Natural killer cell (primary cell): ENCODE measurements at regions of chr5 and their contacts with region 1.

Region 1: DNA sequence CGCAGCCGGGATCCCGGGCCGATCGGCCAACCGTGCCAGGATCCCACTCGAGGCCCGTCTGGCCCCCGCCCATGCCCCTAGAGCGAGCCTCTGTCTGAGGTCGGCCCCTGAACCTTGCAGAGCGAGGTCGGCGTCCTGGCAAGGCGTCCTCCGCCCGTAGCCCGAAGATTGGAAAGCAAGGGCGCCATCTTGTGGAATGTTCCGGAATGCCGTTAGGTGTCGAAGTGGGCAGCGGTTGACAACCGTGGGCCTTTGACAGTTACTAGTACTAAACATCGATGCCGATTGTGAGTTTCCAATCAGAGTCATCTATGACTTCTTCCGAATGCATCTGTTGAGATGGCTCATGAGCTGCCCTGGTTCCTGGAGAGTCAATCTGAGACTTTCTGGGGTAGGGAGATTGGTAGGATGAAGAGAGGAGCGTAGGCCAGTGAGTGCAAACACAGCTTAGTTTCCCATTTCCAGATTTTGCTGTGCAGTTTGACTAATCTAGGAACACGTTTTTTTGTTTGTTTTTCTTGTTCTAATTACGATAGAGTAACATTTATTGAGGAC is 923 bp upstream of the PLK2 start:
- DNase-seq: peak; percentile 87 to 94
- ATAC-seq: peak; percentile 67 to 81 (median 69)
- H3K4me3 ChIP-seq: peak overlapping the region; percentile 94
- H3K4me3 Mint-ChIP-seq: peak overlapping the region; percentile 91
- H3K27ac ChIP-seq: peak overlapping the region; percentile 95
- H3K27ac Mint-ChIP-seq: peak overlapping the region; percentile 84 to 90
- H3K4me1 ChIP-seq: peaks cover 18% of the 10 kb centered on the region
- H3K4me1 Mint-ChIP-seq: peaks cover 15 to 16% of the 10 kb centered on the region in 2 donors
- H3K27me3 ChIP-seq: peaks cover 13% of the 10 kb centered on the region
- H3K27me3 Mint-ChIP-seq: peaks cover 6 to 22% of the 10 kb centered on the region in 2 donors
- CTCF ChIP-seq: peak; percentile 75

Region 2: DNA sequence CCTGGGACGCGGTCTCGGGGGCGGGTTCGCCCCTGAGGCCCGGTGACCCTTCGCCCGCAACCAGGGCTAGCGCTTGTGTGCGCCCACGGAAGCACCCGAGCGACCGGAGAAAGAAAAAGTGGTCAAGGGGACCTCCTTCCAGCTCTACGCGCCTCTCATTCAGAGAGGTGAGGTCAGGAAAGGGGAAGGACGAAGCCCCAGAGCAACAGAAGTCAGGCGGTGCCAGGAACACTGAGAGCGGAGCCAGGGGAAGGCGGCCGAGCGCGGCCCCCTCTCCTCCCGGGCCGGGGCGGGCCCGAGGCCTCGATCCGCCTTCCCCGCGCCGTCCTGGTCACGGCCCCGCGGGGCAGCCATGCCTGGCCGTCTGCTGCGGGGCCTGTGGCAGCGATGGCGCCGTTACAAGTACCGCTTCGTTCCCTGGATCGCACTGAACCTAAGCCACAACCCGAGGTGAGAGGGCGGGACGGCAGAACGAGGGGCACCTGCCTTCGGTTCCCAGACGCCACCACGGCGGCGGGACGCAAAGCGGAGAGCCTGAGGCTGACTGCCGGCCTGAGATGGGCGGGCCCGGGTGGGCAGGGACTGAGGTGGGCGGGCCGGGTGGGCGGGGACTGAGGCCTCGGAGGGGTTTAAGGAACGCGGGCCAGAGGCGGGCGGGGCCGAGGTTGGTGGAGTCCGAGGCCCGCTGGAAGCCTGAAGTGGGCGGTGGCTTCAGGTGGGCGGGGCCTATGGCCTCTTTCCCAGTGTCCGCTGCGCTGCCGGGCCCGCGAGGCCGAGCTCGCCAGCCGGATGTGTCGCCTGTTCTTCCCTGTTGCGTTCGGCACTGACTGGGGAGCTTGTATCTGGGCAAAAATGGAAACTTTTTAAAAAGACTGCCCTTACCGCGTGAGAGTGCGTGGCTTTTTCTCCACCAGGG is 1551.3 kb before region 1 on chr5 and contains the start of gene SETD9:
- intact Hi-C with region 1: loop called (anchors 5 kb)
- DNase-seq: peak; percentile 81 to 92
- ATAC-seq: peak; percentile 82 to 92 (median 85)
- H3K4me3 ChIP-seq: peak within 1 kb of the TSS; percentile 58
- H3K4me3 Mint-ChIP-seq: peak within 1 kb of the TSS; percentile 99
- H3K27ac ChIP-seq: peak within 1 kb of the TSS; percentile 78
- H3K27ac Mint-ChIP-seq: peak within 1 kb of the TSS; percentile 90 to 93
- H3K4me1 ChIP-seq: peaks cover 10% of the 10 kb centered on the region
- H3K4me1 Mint-ChIP-seq: peaks cover 21 to 23% of the 10 kb centered on the region in 2 donors
- H3K27me3 ChIP-seq: no peaks in the 10 kb centered on the region
- H3K27me3 Mint-ChIP-seq: no peaks in the 10 kb centered on the region
- CTCF ChIP-seq: no peak
- total RNA-seq, gene SETD9: 5.6 to 8.6 (median 6.0) TPM

Region 3: GRCh38 chr5:57298295-57298984 is 1162.4 kb before region 1 on chr5:
- intact Hi-C with region 1: loop called (anchors 1 kb)
- DNase-seq: peak; percentile 77 to 94
- ATAC-seq: peak; percentile 91 to 93 (median 92)
- H3K4me3 ChIP-seq: peak overlapping the region; percentile 10
- H3K4me3 Mint-ChIP-seq: peak overlapping the region; percentile 74
- H3K27ac ChIP-seq: no peak overlapping the region
- H3K27ac Mint-ChIP-seq: peak overlapping the region; percentile 61 to 77
- H3K4me1 ChIP-seq: peaks cover 12% of the 10 kb centered on the region
- H3K4me1 Mint-ChIP-seq: peaks cover 9 to 10% of the 10 kb centered on the region in 2 donors
- H3K27me3 ChIP-seq: no peaks in the 10 kb centered on the region
- H3K27me3 Mint-ChIP-seq: no peaks in the 10 kb centered on the region
- CTCF ChIP-seq: peak; percentile 60

Region 4: GRCh38 chr5:57499262-57500050 is 961.4 kb before region 1 on chr5:
- intact Hi-C with region 1: loop called (anchors 2 kb)
- DNase-seq: peak in 1 of 2 donors; percentile 44
- ATAC-seq: peak in 1 of 3 donors; percentile 39
- H3K4me3 ChIP-seq: no peak overlapping the region
- H3K4me3 Mint-ChIP-seq: peak overlapping the region; percentile 43
- H3K27ac ChIP-seq: no peak overlapping the region
- H3K27ac Mint-ChIP-seq: peak overlapping the region in 1 of 2 donors; percentile 32
- H3K4me1 ChIP-seq: no peaks in the 10 kb centered on the region
- H3K4me1 Mint-ChIP-seq: peaks cover 0 to 4% of the 10 kb centered on the region in 2 donors
- H3K27me3 ChIP-seq: no peaks in the 10 kb centered on the region
- H3K27me3 Mint-ChIP-seq: peaks cover 12 to 25% of the 10 kb centered on the region in 2 donors
- CTCF ChIP-seq: peak; percentile 28

Region 5: GRCh38 chr5:57650360-57651069 is 810.3 kb before region 1 on chr5:
- intact Hi-C with region 1: loop called (anchors 2 kb)
- DNase-seq: peak in 1 of 2 donors; percentile 38
- ATAC-seq: peak; percentile 39 to 63 (median 40)
- H3K4me3 ChIP-seq: no peak overlapping the region
- H3K4me3 Mint-ChIP-seq: no peak overlapping the region
- H3K27ac ChIP-seq: no peak overlapping the region
- H3K27ac Mint-ChIP-seq: no peak overlapping the region
- H3K4me1 ChIP-seq: no peaks in the 10 kb centered on the region
- H3K4me1 Mint-ChIP-seq: no peaks in the 10 kb centered on the region
- H3K27me3 ChIP-seq: no peaks in the 10 kb centered on the region
- H3K27me3 Mint-ChIP-seq: peaks cover 0 to 3% of the 10 kb centered on the region in 2 donors
- CTCF ChIP-seq: peak; percentile 44

Region 6: DNA sequence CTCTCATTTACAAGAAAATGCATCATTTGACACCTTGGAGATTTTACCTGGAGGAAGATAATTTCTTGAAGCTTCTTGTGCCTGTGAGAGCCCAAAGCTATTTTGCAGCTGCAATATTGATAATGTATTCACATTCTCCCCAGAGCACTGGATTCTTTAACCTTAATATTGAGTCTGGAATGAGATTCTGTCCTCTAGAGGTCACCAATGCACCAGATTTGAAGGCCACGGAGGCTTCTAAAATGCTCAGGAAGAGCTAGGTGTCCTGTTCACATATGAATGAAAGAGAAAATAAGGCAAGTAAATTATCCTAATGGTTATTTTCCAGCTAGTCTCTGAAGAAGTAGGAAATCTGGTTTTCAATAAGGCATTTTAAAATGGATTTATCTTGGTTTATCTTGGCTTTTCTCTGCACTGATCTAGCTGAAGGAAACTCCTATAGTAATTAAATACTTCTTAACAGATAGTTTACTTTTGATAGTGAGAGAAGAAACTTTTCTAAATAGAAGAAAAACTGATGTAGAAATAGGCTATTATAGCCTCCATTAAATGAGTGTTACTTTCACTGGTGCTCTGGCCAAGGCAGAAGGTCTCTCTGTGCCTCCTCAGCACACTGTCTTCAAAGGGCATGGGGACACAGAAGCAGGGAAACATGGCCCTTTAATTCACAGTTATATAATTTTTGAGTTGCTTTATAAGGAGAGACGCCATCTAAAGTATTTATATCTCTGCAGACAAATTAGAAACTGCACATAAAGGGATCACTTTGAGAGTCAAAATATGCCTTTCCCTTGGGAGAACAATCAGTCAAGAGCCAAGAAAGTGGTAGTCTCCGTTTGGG is 681.2 kb before region 1 on chr5:
- intact Hi-C with region 1: loop called (anchors 1 kb)
- DNase-seq: peak in 1 of 2 donors; percentile 49
- ATAC-seq: peak in 2 of 3 donors; percentile 58 to 72
- H3K4me3 ChIP-seq: no peak overlapping the region
- H3K4me3 Mint-ChIP-seq: no peak overlapping the region
- H3K27ac ChIP-seq: no peak overlapping the region
- H3K27ac Mint-ChIP-seq: no peak overlapping the region
- H3K4me1 ChIP-seq: no peaks in the 10 kb centered on the region
- H3K4me1 Mint-ChIP-seq: no peaks in the 10 kb centered on the region
- H3K27me3 ChIP-seq: no peaks in the 10 kb centered on the region
- H3K27me3 Mint-ChIP-seq: no peaks in the 10 kb centered on the region
- CTCF ChIP-seq: peak; percentile 47

Region 7: GRCh38 chr5:57887851-57888621 is 572.8 kb before region 1 on chr5:
- intact Hi-C with region 1: loop called (anchors 5 kb)
- DNase-seq: no peak
- ATAC-seq: peak in 1 of 3 donors; percentile 49
- H3K4me3 ChIP-seq: no peak overlapping the region
- H3K4me3 Mint-ChIP-seq: no peak overlapping the region
- H3K27ac ChIP-seq: no peak overlapping the region
- H3K27ac Mint-ChIP-seq: no peak overlapping the region
- H3K4me1 ChIP-seq: no peaks in the 10 kb centered on the region
- H3K4me1 Mint-ChIP-seq: no peaks in the 10 kb centered on the region
- H3K27me3 ChIP-seq: no peaks in the 10 kb centered on the region
- H3K27me3 Mint-ChIP-seq: no peaks in the 10 kb centered on the region
- CTCF ChIP-seq: no peak

Region 8: DNA sequence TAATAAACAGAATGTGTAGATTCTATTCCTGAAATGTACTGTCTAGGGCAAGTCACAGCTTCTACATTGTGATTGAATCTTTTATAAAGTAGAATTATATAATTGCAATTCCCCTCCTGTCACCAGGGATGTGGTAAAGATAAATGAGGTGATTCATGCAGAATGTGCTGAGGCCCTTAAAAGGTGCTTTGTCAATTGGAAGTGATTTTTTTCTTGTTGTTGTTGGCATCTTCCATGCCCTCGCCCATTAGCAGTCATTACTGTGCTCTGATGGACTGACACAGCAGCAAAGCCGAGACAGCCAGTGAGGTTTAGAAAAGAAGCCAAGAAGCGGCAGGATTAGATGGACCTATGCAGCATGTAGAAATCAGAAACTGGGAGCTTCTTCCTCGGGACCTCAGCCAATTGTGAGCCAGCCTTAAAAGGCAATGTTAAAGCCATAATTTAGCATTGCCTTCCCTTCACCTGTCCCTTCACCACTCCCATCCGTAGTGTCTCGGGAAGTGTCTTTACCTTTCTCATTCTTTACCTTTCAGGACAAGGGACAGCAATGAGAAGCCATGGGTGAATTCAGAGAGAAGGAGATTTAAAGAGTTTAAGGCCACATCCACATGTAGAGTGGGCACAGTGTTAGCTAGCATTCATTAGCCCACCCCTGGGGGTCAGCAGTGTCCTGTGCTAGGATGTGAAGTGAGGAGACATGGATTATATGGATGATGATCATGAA is 258.7 kb before region 1 on chr5:
- intact Hi-C with region 1: no loop called
- DNase-seq: no peak
- ATAC-seq: no peak
- H3K4me3 ChIP-seq: no peak overlapping the region
- H3K4me3 Mint-ChIP-seq: no peak overlapping the region
- H3K27ac ChIP-seq: no peak overlapping the region
- H3K27ac Mint-ChIP-seq: no peak overlapping the region
- H3K4me1 ChIP-seq: no peaks in the 10 kb centered on the region
- H3K4me1 Mint-ChIP-seq: no peaks in the 10 kb centered on the region
- H3K27me3 ChIP-seq: no peaks in the 10 kb centered on the region
- H3K27me3 Mint-ChIP-seq: no peaks in the 10 kb centered on the region
- CTCF ChIP-seq: no peak